ENCODE measurements at regions of chr13 and their contacts with region 1.

Region 1: DNA sequence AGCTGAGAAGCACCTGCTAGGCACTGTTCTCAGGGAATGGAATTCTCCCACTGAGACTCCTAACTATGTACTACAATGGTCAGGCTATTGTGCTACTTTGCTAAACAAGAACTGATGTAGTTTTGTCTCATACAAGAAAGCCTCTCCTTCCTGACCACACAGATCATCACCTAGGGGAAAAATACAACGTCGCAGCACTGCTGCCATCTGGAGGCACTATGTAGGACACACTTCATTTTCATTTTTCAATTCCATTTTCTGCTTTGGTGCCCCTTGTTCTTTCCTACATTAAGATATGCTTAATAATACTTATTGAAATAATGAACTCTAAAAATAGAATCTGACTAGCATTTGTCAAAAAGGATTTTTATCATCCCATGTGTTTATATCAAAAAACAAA is 21.1 kb downstream of the PROSER1 start:
- DNase-seq: peak; percentile 12
- ATAC-seq: peak; percentile 78
- H3K4me3 ChIP-seq: no peak overlapping the region
- H3K27ac ChIP-seq: no peak overlapping the region
- H3K4me1 ChIP-seq: no peaks in the 10 kb centered on the region
- H3K27me3 ChIP-seq: no peaks in the 10 kb centered on the region
- CTCF ChIP-seq: peak; percentile 68
- EP300 ChIP-seq: no peak
- POLR2A ChIP-seq: no peak
- RAD21 ChIP-seq: no peak

Region 2: DNA sequence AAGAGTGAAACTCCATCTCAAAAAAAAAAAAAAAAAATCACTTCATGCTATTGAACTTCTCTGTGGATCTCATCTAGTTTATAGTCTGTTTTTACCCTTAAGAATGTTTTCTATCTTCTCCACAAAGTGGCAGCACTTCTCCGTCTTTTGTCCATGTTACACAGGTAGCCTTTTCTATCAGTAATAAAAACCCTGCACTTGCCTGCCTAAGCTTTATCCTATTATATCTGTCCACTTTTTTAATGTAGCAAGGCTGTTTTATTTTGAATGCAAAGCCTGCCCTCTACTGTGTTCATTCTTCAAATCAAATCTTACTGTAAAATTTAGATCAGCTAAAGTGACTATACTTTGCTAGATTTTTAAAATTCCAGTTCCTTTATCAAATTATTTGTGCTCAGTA is 150.1 kb before region 1 on chr13:
- CTCF ChIA-PET with region 1: no interaction called
- POLR2A ChIA-PET with region 1: no interaction called
- in situ Hi-C with region 1: no loop called
- intact Hi-C with region 1: loop called (anchors 2 kb)
- DNase-seq: peak; percentile 5
- ATAC-seq: peak; percentile 38; the same call in 1 of the 3 replicates
- H3K4me3 ChIP-seq: no peak overlapping the region
- H3K27ac ChIP-seq: no peak overlapping the region
- H3K4me1 ChIP-seq: no peaks in the 10 kb centered on the region
- H3K27me3 ChIP-seq: no peaks in the 10 kb centered on the region
- CTCF ChIP-seq: 0 out of 2 replicates have a peak, but pooled peaks have one; percentile 14
- EP300 ChIP-seq: no peak
- POLR2A ChIP-seq: no peak
- RAD21 ChIP-seq: no peak

Region 3: GRCh38 chr13:38914070-38914469 is 102.7 kb before region 1 on chr13:
- CTCF ChIA-PET with region 1: no interaction called
- POLR2A ChIA-PET with region 1: no interaction called
- in situ Hi-C with region 1: no loop called
- intact Hi-C with region 1: loop called (anchors 5 kb)
- DNase-seq: no peak
- ATAC-seq: no peak
- H3K4me3 ChIP-seq: no peak overlapping the region
- H3K27ac ChIP-seq: no peak overlapping the region
- H3K4me1 ChIP-seq: peaks cover 8% of the 10 kb centered on the region
- H3K27me3 ChIP-seq: 0 out of 5 replicates have a peak, but pooled peaks cover 0 to 7% of the 10 kb centered on the region in 2 experiments
- CTCF ChIP-seq: 0 out of 2 replicates have a peak, but pooled peaks have one; percentile 9
- EP300 ChIP-seq: no peak
- POLR2A ChIP-seq: no peak
- RAD21 ChIP-seq: no peak

Region 4: GRCh38 chr13:38970380-38971051 is 46.3 kb before region 1 on chr13:
- CTCF ChIA-PET with region 1: interaction called, 5 read pairs
- POLR2A ChIA-PET with region 1: no interaction called
- in situ Hi-C with region 1: no loop called
- intact Hi-C with region 1: loop called (anchors 1 kb)
- DNase-seq: no peak
- ATAC-seq: peak; percentile 52
- H3K4me3 ChIP-seq: no peak overlapping the region
- H3K27ac ChIP-seq: no peak overlapping the region
- H3K4me1 ChIP-seq: no peaks in the 10 kb centered on the region
- H3K27me3 ChIP-seq: no peaks in the 10 kb centered on the region
- CTCF ChIP-seq: peak; percentile 50
- EP300 ChIP-seq: no peak
- POLR2A ChIP-seq: no peak
- RAD21 ChIP-seq: no peak